Panc1 (cell line): ENCODE measurements at regions of chr1 and their contacts with region 1.

Region 1: DNA sequence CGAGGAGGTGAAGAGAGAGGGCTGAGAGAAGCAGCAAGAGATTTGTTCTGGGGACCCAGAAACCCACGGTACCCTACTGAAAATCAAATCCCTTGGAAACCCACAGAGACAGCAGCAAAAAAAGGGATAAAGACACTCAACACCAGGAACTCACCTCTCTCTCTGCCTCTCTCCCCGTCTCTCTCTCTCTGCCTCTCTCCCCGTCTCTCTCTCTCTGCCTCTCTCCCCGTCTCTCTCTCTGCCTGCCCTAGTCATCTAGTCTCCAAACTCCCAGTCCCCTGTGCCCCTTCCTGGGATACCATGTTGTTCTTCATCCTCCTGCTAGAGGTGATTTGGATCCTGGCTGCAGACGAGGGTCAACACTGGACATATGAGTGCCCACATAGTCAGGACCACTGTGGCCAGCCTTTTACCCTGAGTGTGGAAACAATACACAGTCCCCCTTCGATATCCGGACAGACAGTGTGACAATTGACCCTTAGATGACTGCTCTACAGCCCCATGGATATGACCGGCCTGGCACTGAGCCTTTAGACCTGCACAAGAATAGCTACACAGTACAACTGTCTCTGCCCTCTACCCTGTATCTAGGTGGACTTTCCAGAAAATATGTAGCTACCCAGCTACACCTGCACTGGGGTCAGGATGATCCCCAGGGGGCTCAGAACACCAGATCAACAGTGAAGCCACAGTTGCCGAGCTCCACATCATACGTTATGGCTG is 9.8 kb upstream of the ALDH9A1 start:
- DNase-seq: no peak
- ATAC-seq: no peak
- H3K4me3 ChIP-seq: no peak overlapping the region
- H3K27ac ChIP-seq: no peak overlapping the region
- H3K4me1 ChIP-seq: no peaks in the 10 kb centered on the region
- H3K27me3 ChIP-seq: peaks cover 7% of the 10 kb centered on the region; the same call in 1 of the 2 replicates
- CTCF ChIP-seq: no peak

Region 2: GRCh38 chr1:165674599-165674998 is 33.5 kb before region 1 on chr1:
- CTCF ChIA-PET with region 1: no interaction called
- POLR2A ChIA-PET with region 1: interaction called, 17 read pairs
- in situ Hi-C with region 1: no loop called
- intact Hi-C with region 1: no loop called
- DNase-seq: no peak
- ATAC-seq: no peak
- H3K4me3 ChIP-seq: no peak overlapping the region
- H3K27ac ChIP-seq: no peak overlapping the region
- H3K4me1 ChIP-seq: no peaks in the 10 kb centered on the region
- H3K27me3 ChIP-seq: no peaks in the 10 kb centered on the region
- CTCF ChIP-seq: no peak